PC-9 (cell line): ENCODE measurements at regions of chr10 and their contacts with region 1.

Region 1: DNA sequence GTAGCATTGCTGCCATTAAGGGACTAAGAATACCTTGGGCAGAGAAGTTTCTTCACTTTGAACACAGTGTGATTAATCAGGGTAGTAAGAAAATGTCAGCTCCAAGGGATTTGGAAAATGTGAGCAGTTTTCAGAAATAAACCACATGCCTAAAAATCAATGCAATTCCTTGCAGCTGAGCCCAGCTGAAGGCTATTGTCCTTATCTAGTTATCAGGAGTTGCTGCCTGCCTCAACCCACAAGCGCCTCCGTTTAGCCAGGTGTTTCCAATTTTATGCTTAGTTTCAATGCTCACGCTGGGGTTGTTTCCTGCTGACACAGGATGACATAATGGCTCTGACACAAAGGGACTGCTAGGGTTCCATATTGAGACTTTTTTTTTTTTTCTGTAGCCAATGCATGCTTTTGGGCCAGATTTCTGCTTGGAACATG is 132.3 kb upstream of the ANK3 start:
- DNase-seq: peak in 1 of 2 experiments; percentile 14
- H3K4me3 ChIP-seq: no peak overlapping the region
- H3K27ac ChIP-seq: no peak overlapping the region
- H3K4me1 ChIP-seq: no peaks in the 10 kb centered on the region
- H3K27me3 ChIP-seq: no peaks in the 10 kb centered on the region
- CTCF ChIP-seq: no peak

Region 2: GRCh38 chr10:60235001-60235400 is 287.0 kb before region 1 on chr10:
- CTCF ChIA-PET with region 1: no interaction called
- POLR2A ChIA-PET with region 1: no interaction called
- intact Hi-C with region 1: no loop called
- DNase-seq: no peak
- H3K4me3 ChIP-seq: no peak overlapping the region
- H3K27ac ChIP-seq: no peak overlapping the region
- H3K4me1 ChIP-seq: no peaks in the 10 kb centered on the region
- H3K27me3 ChIP-seq: no peaks in the 10 kb centered on the region
- CTCF ChIP-seq: no peak

Region 3: GRCh38 chr10:60314069-60314940 is 207.7 kb before region 1 on chr10:
- CTCF ChIA-PET with region 1: no interaction called
- POLR2A ChIA-PET with region 1: no interaction called
- intact Hi-C with region 1: no loop called
- DNase-seq: peak in 1 of 2 experiments; percentile 55
- H3K4me3 ChIP-seq: no peak overlapping the region
- H3K27ac ChIP-seq: 0 out of 2 replicates have a peak overlapping the region, but pooled peaks have one; percentile 4
- H3K4me1 ChIP-seq: peaks cover 29% of the 10 kb centered on the region
- H3K27me3 ChIP-seq: no peaks in the 10 kb centered on the region
- CTCF ChIP-seq: no peak

Region 4: DNA sequence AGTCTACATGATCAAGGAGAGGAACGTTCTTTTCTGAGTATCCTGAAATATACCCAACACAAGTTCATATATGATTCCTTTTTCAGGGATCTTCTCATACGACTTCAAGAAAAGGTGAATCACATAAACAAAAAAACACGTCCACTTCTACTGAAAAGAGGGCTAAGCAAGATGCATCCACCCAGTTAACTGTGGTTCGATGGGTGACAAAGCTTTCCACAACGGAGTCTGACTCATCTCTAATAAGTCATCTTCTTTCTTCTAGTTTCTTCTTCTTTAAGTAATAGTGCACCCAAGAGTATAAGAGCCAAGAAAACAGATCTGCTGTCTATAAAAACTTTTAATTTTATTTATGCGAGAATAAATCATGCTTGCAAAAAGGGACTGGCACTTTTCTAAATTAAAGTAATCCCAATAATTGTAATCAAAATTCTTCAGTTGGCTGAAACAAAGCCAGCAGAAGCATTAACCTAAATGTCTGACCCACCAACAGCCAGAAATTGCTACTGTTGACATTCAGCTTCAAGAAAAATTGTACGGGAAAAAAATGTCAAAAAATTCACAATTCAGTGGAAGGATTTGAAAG is 14.6 kb after region 1 on chr10:
- CTCF ChIA-PET with region 1: no interaction called
- POLR2A ChIA-PET with region 1: no interaction called
- intact Hi-C with region 1: no loop called
- DNase-seq: no peak
- H3K4me3 ChIP-seq: no peak overlapping the region
- H3K27ac ChIP-seq: no peak overlapping the region
- H3K4me1 ChIP-seq: peaks cover 12% of the 10 kb centered on the region
- H3K27me3 ChIP-seq: no peaks in the 10 kb centered on the region
- CTCF ChIP-seq: no peak

Region 5: DNA sequence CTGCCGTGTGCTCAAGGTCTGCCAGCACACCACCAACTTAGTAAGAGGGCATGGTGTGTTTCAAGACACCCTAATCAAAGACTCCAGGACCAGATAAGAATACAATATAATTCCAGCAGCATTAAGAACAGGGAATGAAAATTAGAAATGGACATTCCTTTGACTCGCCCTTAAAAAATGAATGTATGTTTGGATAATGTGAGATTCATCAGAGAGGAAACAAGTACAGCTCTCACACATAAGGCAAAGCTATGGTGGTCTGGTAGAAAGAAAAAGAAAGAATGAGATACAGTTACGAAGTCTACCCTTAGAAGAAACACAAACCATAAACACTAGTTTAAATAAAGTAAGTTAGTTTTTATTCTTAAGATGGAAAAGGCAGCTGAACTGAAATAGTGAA is 42.5 kb after region 1 on chr10:
- CTCF ChIA-PET with region 1: interaction called, 10 read pairs
- POLR2A ChIA-PET with region 1: no interaction called
- intact Hi-C with region 1: no loop called
- DNase-seq: no peak
- H3K4me3 ChIP-seq: no peak overlapping the region
- H3K27ac ChIP-seq: no peak overlapping the region
- H3K4me1 ChIP-seq: no peaks in the 10 kb centered on the region
- H3K27me3 ChIP-seq: no peaks in the 10 kb centered on the region
- CTCF ChIP-seq: no peak